ENCODE measurements at regions of chr20 and their contacts with region 1.

Region 1: DNA sequence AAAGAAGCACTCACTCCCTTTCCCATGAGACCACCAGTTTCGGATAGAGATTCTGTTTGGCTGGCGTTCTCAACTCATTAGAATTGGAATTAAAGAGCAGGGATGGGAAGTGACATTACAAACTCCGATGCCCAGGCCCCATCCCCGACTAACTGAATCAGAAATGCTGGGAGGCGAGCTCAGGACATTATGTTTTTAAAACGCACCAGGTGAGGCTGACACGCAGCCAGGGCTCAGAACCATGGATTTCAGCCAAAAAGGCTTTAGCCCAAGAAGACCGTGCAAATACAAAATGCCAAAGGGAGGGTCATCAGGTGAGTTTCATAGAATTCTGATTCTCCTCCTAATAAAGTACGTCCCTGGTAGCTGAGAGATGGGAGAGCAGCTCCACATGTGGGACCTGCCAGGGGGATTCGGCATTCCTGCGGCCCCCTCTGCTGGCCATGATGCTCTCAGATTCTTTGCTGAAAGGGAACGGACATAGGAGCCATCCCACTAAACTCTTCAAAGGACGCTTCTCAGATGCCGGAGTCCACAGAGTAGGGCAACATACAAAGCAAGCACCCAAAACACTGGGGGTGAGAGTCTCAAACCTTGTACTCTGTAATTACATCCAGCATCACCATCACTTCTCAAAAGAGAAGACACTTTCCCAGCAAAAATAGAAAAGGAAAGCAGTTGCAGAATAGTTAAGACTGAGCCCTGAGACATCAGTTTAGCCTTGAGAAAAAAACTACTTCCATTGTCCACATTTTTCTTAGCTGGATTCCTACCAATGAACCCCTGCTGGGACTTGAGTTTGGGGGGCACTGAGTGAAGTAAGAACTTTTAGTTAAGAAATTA is 205.2 kb downstream of the BMP7 start:
- DNase-seq: peak; percentile 82 to 85
- H3K4me3 ChIP-seq: no peak overlapping the region
- H3K4me3 Mint-ChIP-seq: no peak overlapping the region
- H3K27ac Mint-ChIP-seq: no peak overlapping the region
- H3K4me1 ChIP-seq: no peaks in the 10 kb centered on the region
- H3K4me1 Mint-ChIP-seq: peaks cover 7% of the 10 kb centered on the region
- H3K27me3 ChIP-seq: no peaks in the 10 kb centered on the region
- H3K27me3 Mint-ChIP-seq: peaks cover 21% of the 10 kb centered on the region
- CTCF ChIP-seq: peak; percentile 90 to 93

Region 2: DNA sequence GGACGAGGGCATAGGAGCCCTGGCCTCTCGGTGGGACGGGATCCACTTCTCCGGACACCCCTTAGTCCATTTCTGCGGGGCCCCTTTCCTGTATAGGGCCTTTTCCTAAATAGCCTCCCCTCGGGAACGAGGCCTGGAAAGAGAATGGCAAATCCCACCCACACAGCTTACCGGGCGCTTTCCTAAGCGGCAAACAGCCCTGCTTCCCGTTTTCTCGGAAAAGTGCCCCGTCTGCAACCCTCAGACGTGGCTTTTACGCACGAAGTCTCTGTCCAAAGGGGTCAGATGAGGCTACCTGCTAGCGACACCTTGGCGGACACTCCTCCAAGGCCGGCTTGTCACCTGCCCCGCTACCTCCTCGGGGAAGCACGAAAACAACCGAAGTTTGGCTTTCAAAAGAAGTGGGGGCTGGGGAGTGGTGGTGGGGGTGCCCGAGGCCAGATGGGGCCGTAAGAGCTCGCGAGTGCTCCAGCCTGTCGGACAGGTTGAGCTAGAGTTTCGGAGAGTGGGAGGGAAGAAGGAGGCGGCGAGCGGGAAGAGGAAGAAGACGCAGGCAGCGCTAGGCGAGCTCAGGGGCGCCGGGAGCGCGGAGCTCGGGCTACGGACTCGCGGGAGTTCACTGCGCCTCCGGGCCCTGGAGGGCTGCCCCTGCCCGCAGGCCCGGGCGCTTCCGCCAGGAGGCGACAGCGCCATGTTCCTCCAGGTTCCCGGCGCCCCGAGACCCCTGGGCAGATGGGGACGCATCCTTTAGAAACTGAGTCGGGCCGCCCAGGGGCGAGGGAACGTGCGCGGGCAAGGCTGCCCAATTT is 431.4 kb before region 1 on chr20:
- CTCF ChIA-PET with region 1: interaction called, 7 read pairs
- POLR2A ChIA-PET with region 1: no interaction called
- intact Hi-C with region 1: loop called (anchors 2 kb)
- DNase-seq: peak; percentile 94 to 95
- H3K4me3 ChIP-seq: peak overlapping the region; percentile 75
- H3K4me3 Mint-ChIP-seq: peak overlapping the region; percentile 79
- H3K27ac Mint-ChIP-seq: peak overlapping the region; percentile 64
- H3K4me1 ChIP-seq: peaks cover 6% of the 10 kb centered on the region; the same call in 1 of the 2 replicates
- H3K4me1 Mint-ChIP-seq: peaks cover 6% of the 10 kb centered on the region
- H3K27me3 ChIP-seq: no peaks in the 10 kb centered on the region
- H3K27me3 Mint-ChIP-seq: no peaks in the 10 kb centered on the region
- CTCF ChIP-seq: peak; percentile 95 to 96

Region 3: DNA sequence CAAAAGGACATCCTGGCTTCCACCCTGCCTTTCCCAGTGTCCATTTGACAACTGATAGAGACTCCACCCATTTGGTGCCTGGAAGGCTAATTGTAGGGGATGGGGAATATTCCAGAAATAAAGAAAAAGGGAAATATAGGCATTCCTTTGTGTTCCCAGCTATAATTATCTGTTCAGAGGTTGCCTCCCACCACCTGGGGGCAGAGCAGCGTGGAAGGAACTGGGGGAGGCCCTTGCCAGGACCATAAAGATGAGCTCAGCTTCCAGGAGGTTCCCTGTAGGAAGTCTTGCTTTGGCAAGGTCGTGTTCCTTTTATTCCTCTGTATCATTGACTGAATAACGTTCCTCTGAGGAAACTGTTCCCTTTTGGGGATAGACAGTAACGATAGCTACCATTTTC is 217.5 kb before region 1 on chr20:
- CTCF ChIA-PET with region 1: interaction called, 30 read pairs
- POLR2A ChIA-PET with region 1: no interaction called
- intact Hi-C with region 1: loop called (anchors 5 kb)
- DNase-seq: peak in 1 of 2 experiments; percentile 59
- H3K4me3 ChIP-seq: no peak overlapping the region
- H3K4me3 Mint-ChIP-seq: no peak overlapping the region
- H3K27ac Mint-ChIP-seq: no peak overlapping the region
- H3K4me1 ChIP-seq: no peaks in the 10 kb centered on the region
- H3K4me1 Mint-ChIP-seq: no peaks in the 10 kb centered on the region
- H3K27me3 ChIP-seq: no peaks in the 10 kb centered on the region; the same call in 1 of the 2 replicates
- H3K27me3 Mint-ChIP-seq: peaks cover 8% of the 10 kb centered on the region
- CTCF ChIP-seq: peak; percentile 39 to 61

Region 4: DNA sequence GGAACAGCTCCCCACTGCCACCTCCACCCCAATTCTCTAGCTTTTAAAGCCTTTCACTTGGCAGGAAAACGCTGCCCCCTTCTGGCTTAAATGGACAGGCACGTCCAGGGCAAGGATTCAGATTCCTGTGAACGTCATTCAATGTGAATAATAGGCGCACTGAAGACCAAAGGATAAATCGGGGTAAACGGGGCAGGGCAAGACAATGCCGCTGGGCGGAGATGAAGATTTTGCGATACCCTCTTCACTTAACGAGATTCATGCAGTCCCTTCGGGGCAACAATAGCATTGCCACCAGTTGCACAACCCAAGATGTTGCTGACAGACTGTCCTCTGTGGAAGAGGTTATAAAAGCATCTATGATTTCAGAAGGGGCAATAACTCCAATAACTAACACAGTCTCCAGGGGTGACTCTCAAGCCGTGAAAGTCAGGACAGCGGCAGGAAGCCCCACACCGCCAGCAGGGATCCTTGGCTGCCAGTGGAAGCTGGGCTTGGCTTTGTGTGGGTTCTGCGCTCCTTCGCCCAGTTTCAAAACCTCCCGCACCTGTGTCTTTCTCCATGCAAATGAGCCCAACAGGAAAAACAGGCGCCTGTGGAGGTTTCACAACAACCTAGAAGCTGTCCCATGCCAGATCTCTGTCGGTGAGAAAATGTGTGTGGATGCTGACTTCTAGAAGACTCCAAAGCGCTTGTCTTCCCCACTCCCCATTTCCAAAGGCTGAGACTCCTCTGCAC is 86.6 kb before region 1 on chr20:
- CTCF ChIA-PET with region 1: interaction called, 8 read pairs
- POLR2A ChIA-PET with region 1: no interaction called
- intact Hi-C with region 1: loop called (anchors 1 kb)
- DNase-seq: peak; percentile 76 to 81
- H3K4me3 ChIP-seq: no peak overlapping the region
- H3K4me3 Mint-ChIP-seq: no peak overlapping the region
- H3K27ac Mint-ChIP-seq: no peak overlapping the region
- H3K4me1 ChIP-seq: no peaks in the 10 kb centered on the region
- H3K4me1 Mint-ChIP-seq: no peaks in the 10 kb centered on the region
- H3K27me3 ChIP-seq: peaks cover 1% of the 10 kb centered on the region; the same call in 1 of the 2 replicates
- H3K27me3 Mint-ChIP-seq: peaks cover 21% of the 10 kb centered on the region
- CTCF ChIP-seq: peak; percentile 95 to 96

Region 5: GRCh38 chr20:57013718-57014117 is 47.6 kb before region 1 on chr20:
- CTCF ChIA-PET with region 1: interaction called, 5 read pairs
- POLR2A ChIA-PET with region 1: no interaction called
- intact Hi-C with region 1: loop called (anchors 2 kb)
- DNase-seq: peak; percentile 86 to 91
- H3K4me3 ChIP-seq: peak overlapping the region; percentile 28
- H3K4me3 Mint-ChIP-seq: peak overlapping the region; percentile 72
- H3K27ac Mint-ChIP-seq: peak overlapping the region; percentile 29
- H3K4me1 ChIP-seq: peaks cover 25% of the 10 kb centered on the region
- H3K4me1 Mint-ChIP-seq: peaks cover 47% of the 10 kb centered on the region
- H3K27me3 ChIP-seq: no peaks in the 10 kb centered on the region
- H3K27me3 Mint-ChIP-seq: no peaks in the 10 kb centered on the region
- CTCF ChIP-seq: no peak

Region 6: DNA sequence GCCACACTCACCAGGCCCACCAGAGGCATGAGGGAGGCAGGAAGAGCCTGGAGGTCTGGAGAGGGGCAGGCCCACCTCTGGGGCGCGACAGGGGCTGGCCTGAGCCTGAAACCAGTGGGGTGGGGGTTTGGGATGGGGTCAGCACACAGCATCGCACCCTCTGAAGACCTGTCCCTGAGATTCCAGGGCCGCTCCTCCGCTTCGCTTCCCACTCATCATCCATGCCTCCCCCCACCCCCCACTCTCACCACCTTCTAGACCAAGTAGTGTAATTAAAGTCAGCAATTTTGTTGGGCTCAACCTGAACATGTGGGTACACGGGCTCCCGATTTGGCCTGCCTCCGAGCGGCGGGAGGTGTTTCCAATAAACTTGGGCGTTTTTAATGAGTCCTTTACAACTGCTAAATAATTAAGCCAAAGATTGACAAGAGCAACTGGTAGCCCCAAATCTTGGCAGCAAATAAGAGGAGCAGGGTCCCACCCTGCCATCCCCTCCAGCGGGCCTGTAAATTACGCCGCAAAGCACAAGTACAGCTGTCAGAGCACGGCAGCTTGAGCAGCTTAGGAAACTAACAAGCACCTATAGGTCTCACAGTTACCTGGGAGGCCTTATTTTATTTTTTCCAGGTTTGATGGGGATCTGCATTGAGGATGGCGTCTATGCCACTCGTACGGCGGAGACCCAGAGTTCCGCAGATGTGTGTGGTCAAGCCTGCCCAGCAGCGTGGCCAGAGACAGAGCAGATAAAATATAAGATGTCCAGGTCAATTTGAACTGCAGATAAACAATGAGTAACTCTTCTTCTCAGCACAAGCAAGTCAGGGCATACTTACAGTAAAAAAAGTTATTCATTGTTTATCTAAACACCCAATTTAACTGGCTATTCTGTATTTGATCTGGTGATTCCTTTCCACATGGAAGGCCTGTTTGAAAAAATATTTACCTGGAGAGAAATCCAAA is 12.0 kb before region 1 on chr20:
- CTCF ChIA-PET with region 1: interaction called, 16 read pairs
- POLR2A ChIA-PET with region 1: no interaction called
- intact Hi-C with region 1: no loop called
- DNase-seq: no peak
- H3K4me3 ChIP-seq: no peak overlapping the region
- H3K4me3 Mint-ChIP-seq: no peak overlapping the region
- H3K27ac Mint-ChIP-seq: no peak overlapping the region
- H3K4me1 ChIP-seq: peaks cover 28% of the 10 kb centered on the region
- H3K4me1 Mint-ChIP-seq: peaks cover 17% of the 10 kb centered on the region
- H3K27me3 ChIP-seq: no peaks in the 10 kb centered on the region
- H3K27me3 Mint-ChIP-seq: no peaks in the 10 kb centered on the region
- CTCF ChIP-seq: no peak

Region 7: GRCh38 chr20:57071283-57071770 is 10.0 kb after region 1 on chr20:
- CTCF ChIA-PET with region 1: interaction called, 12 read pairs
- POLR2A ChIA-PET with region 1: no interaction called
- intact Hi-C with region 1: no loop called
- DNase-seq: peak; percentile 77 to 80
- H3K4me3 ChIP-seq: peak overlapping the region; percentile 35
- H3K4me3 Mint-ChIP-seq: peak overlapping the region; percentile 76
- H3K27ac Mint-ChIP-seq: peak overlapping the region; percentile 38
- H3K4me1 ChIP-seq: peaks cover 20% of the 10 kb centered on the region
- H3K4me1 Mint-ChIP-seq: peaks cover 9% of the 10 kb centered on the region
- H3K27me3 ChIP-seq: no peaks in the 10 kb centered on the region
- H3K27me3 Mint-ChIP-seq: peaks cover 3% of the 10 kb centered on the region
- CTCF ChIP-seq: no peak

Region 8: DNA sequence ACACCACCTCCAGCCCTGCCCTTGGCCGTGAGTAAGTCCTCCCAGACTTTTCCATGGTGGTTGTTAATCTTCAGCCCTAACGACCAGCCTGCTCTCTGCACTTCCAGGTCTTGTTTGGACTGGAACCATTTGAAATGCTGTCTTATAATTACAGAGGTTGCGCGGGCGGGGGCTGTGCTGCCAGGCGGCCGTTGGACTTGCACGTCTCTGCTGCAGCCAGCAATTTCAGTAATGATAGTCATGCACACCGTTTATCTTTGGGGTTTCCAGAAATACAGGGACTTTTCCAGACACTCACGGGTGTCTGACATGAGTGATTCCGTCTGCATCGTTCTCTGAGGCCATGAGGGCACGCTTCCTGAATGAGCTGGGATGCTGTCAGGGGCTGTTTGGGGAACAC is 87.0 kb after region 1 on chr20:
- CTCF ChIA-PET with region 1: no interaction called
- POLR2A ChIA-PET with region 1: no interaction called
- intact Hi-C with region 1: no loop called
- DNase-seq: no peak
- H3K4me3 ChIP-seq: no peak overlapping the region
- H3K4me3 Mint-ChIP-seq: no peak overlapping the region
- H3K27ac Mint-ChIP-seq: no peak overlapping the region
- H3K4me1 ChIP-seq: no peaks in the 10 kb centered on the region
- H3K4me1 Mint-ChIP-seq: no peaks in the 10 kb centered on the region
- H3K27me3 ChIP-seq: no peaks in the 10 kb centered on the region
- H3K27me3 Mint-ChIP-seq: peaks cover 27% of the 10 kb centered on the region
- CTCF ChIP-seq: no peak